ENCODE measurements at regions of chr4 and their contacts with region 1.

Region 1: GRCh38 chr4:56460085-56460484 is 7.3 kb upstream of the SRP72 start:
- DNase-seq: peak; percentile 38
- H3K4me3 Mint-ChIP-seq: peak overlapping the region; percentile 21
- H3K27ac Mint-ChIP-seq: peak overlapping the region; percentile 72
- H3K4me1 Mint-ChIP-seq: peaks cover 27% of the 10 kb centered on the region
- H3K27me3 Mint-ChIP-seq: no peaks in the 10 kb centered on the region
- CTCF ChIP-seq: no peak

Region 2: GRCh38 chr4:56169061-56169460 is 291.0 kb before region 1 on chr4:
- CTCF ChIA-PET with region 1: no interaction called
- POLR2A ChIA-PET with region 1: no interaction called
- intact Hi-C with region 1: no loop called
- DNase-seq: no peak
- H3K4me3 Mint-ChIP-seq: no peak overlapping the region
- H3K27ac Mint-ChIP-seq: no peak overlapping the region
- H3K4me1 Mint-ChIP-seq: no peaks in the 10 kb centered on the region
- H3K27me3 Mint-ChIP-seq: peaks cover 14% of the 10 kb centered on the region
- CTCF ChIP-seq: no peak

Region 3: DNA sequence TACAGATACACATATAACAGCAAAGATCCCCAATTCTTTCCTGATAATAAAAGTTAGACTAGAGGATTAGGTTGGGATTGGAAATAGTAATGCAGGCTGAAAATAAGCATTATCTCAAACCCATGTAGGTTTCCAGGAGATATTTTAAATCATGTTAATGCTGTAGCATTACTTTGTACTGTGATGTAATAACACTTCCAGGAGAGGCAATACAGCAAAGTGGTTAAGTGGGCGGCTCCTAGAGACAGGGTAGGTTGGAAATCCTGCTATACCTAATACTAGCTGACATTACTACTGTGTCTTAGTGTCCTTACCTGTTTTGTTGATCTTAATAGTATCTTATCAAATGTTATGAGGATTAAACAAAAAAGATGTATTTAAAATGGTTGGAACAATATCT is 14.4 kb before region 1 on chr4:
- CTCF ChIA-PET with region 1: interaction called, 4 read pairs
- POLR2A ChIA-PET with region 1: interaction called, 90 read pairs
- intact Hi-C with region 1: no loop called
- DNase-seq: no peak
- H3K4me3 Mint-ChIP-seq: no peak overlapping the region
- H3K27ac Mint-ChIP-seq: no peak overlapping the region
- H3K4me1 Mint-ChIP-seq: peaks cover 15% of the 10 kb centered on the region
- H3K27me3 Mint-ChIP-seq: no peaks in the 10 kb centered on the region
- CTCF ChIP-seq: no peak

Region 4: DNA sequence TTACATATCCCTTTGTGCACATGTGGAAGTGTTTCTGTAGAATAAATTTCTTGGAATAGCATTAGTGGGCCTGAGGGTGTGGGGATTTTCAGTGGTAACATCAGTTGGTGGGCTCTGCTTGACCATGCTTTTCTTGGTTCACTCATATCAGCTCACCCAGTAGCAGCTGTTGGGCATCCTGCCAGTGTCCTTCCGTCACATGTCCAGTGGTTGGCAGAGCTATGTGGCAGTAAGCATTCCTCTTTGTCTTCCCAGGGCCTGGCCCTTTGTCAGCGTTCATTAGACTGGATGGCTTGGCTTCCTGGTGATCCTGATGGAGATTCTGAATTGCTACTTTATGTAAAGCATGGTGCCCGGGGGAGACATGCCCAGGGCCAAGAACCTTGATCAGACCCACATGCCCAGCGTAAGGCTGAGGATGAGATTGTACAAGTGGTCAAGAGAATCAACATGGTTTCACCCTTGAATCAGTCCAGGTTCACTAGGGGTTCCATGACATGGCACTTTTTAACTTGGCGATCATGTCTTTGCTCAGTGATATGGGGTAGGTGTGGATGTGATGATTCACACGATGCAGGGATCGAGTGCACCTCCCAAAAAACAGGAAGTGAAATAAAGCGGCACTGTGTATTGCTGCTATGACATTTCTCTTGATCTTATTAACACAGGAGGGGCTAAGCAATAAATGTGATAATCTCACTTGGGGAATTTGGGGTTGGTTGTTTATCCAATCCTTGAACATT is 722.2 kb after region 1 on chr4:
- CTCF ChIA-PET with region 1: no interaction called
- POLR2A ChIA-PET with region 1: no interaction called
- intact Hi-C with region 1: no loop called
- DNase-seq: no peak
- H3K4me3 Mint-ChIP-seq: no peak overlapping the region
- H3K27ac Mint-ChIP-seq: no peak overlapping the region
- H3K4me1 Mint-ChIP-seq: peaks cover 6% of the 10 kb centered on the region
- H3K27me3 Mint-ChIP-seq: no peaks in the 10 kb centered on the region
- CTCF ChIP-seq: no peak